Calu3 (cell line): ENCODE measurements at regions of chr3 and their contacts with region 1.

Region 1: GRCh38 chr3:170054204-170054603 is 16.4 kb downstream of the GPR160 start:
- DNase-seq: no peak
- H3K4me3 Mint-ChIP-seq: no peak overlapping the region
- H3K27ac Mint-ChIP-seq: no peak overlapping the region
- H3K4me1 Mint-ChIP-seq: peaks cover 43% of the 10 kb centered on the region
- H3K27me3 Mint-ChIP-seq: no peaks in the 10 kb centered on the region
- CTCF ChIP-seq: peak; percentile 55

Region 2: DNA sequence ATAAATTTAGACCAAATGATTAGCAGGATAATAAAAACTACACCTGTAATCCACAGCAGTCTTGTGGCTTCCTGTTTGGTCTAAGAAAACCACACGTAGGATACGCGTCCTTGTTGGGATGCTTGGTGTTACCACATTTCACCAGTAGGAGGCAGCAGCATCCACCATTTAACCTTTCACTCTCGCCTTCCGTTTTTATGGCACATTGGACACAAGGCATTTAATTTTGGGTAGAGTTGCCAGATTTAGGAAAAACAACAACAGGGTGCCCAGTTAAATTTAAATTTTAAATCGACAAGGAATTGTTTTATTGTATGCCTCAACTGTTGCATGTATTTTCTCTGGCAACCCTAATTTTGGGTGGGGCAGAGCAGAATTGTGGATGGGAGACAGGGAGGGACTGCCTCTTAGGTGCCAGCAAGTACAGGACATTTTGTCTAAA is 190.7 kb before region 1 on chr3:
- CTCF ChIA-PET with region 1: interaction called, 3 read pairs
- intact Hi-C with region 1: loop called (anchors 1 kb)
- DNase-seq: peak; percentile 88
- H3K4me3 Mint-ChIP-seq: no peak overlapping the region
- H3K27ac Mint-ChIP-seq: no peak overlapping the region
- H3K4me1 Mint-ChIP-seq: peaks cover 3% of the 10 kb centered on the region
- H3K27me3 Mint-ChIP-seq: no peaks in the 10 kb centered on the region
- CTCF ChIP-seq: peak; percentile 96